Head of caudate nucleus (tissue), 42 donors: ENCODE measurements at regions of chr3 and their contacts with region 1.

Region 1: GRCh38 chr3:129249276-129250065 is at the start of gene COPG1:
- DNase-seq: peak; percentile 63 to 93 (median 86)

Region 2: DNA sequence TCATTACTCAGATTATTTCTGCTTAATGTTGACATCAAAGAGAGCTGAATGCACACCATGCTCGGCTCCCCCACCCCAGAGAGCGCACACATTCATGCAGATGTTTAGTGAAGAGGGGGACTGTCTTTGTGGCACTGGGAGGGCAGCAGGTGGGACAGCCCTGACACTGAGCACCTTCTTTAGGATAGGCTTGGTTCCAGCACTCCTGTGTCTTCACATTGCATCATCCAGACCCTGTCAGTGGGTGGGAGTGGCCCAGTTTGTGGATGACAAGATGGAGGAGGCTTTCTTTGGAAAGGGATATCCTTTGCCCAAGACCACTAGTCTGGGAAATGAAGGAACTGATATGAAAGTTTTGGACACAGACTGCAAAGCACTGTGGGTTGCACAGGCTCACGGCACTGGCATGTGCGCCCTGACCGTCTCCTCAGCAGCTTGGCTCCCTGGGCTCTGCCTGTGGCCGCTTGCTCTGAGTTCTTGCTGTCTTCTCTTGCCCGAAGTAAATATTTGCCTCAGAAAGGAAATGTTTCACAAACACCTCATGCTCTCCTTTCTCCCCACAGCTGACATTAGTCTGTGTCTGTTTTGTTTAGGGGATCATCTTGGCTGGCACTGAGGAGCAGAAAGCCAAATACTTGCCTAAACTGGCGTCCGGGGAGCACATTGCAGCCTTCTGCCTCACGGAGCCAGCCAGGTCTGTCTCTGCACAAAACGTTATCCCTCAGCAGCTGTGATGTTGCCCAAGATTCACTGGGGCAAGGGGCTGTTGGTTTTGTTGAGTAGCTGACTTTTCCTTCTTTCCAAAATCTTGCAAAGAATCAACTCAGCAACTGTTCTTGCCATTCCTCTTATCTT is 353.4 kb before region 1 on chr3:
- intact Hi-C with region 1: no loop called
- DNase-seq: no peak

Region 3: DNA sequence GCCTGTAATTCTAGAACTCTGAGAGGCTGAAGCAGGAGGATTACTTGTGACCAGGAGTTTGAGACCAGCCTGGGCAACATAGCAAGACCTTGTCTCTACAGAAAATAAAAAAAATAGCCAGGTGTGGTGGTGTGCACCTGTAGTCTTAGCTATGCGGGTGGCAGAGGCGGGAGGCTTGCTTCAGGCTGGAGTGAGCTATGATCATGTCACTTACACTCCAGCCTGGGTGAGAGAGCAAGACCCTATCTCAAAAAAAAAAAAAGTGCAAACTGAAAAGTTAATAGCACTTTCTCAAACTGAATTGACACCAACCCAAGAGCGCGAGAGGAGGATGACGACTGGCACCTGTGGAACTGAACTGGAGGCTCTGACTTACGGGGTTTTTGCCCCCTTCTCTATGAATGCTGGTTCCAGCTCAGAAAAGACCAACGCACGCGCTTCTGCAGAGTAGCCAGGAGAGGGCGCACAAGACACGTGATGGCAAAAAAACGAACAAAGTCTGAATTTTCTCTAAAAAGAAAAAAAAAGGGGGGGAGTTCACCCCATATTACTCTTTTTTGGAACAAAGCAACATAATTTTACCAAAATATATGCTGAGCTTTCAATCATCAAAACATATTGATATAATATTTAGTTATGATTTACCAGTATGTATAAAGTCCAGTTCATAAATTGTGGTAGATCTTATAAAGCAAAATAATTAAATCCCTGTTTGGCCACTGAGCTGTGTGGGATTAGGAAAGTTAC is 279.3 kb before region 1 on chr3:
- intact Hi-C with region 1: loop called (anchors 10 kb)
- DNase-seq: peak in 37 of 42 donors; percentile 8 to 80 (median 48)

Region 4: GRCh38 chr3:129052675-129053074 is 196.8 kb before region 1 on chr3:
- intact Hi-C with region 1: loop called (anchors 5 kb)
- DNase-seq: peak in 2 of 42 donors; percentile 6 to 28

Region 5: GRCh38 chr3:129183569-129184395 is 65.7 kb before region 1 on chr3 and contains the start of gene CNBP:
- intact Hi-C with region 1: loop called (anchors 5 kb)
- DNase-seq: peak; percentile 76 to 98 (median 95)

Region 6: GRCh38 chr3:129195731-129196256 is 53.7 kb before region 1 on chr3:
- intact Hi-C with region 1: no loop called
- DNase-seq: peak in 39 of 42 donors; percentile 15 to 82 (median 51)